ENCODE measurements at regions of chr5 and their contacts with region 1.

Region 1: DNA sequence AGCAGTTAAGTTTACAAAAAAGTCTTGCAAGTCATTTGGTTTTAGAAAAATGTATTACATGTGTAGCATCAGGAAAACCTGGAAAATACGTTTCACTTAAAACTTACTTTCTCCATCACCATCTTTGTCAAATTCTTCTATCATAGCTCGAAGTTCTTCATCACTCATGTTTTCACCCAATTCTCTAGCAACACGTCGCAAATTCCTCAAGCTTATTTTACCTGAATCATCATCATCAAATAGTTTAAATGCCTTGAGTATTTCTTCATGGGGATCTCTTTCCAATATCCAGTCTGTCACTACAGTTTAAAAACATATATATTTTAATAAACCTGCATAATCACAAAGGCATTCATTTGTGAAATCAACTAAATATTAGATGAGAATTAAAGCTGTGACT is 10.3 kb downstream of the CETN3 start:
- DNase-seq: no peak
- ATAC-seq: no peak
- H3K4me3 ChIP-seq: no peak overlapping the region
- H3K4me3 Mint-ChIP-seq: no peak overlapping the region
- H3K27ac ChIP-seq: no peak overlapping the region
- H3K27ac Mint-ChIP-seq: no peak overlapping the region
- H3K4me1 ChIP-seq: no peaks in the 10 kb centered on the region
- H3K4me1 Mint-ChIP-seq: peaks cover 6% of the 10 kb centered on the region
- H3K27me3 ChIP-seq: no peaks in the 10 kb centered on the region
- H3K27me3 Mint-ChIP-seq: no peaks in the 10 kb centered on the region
- CTCF ChIP-seq: no peak

Region 2: DNA sequence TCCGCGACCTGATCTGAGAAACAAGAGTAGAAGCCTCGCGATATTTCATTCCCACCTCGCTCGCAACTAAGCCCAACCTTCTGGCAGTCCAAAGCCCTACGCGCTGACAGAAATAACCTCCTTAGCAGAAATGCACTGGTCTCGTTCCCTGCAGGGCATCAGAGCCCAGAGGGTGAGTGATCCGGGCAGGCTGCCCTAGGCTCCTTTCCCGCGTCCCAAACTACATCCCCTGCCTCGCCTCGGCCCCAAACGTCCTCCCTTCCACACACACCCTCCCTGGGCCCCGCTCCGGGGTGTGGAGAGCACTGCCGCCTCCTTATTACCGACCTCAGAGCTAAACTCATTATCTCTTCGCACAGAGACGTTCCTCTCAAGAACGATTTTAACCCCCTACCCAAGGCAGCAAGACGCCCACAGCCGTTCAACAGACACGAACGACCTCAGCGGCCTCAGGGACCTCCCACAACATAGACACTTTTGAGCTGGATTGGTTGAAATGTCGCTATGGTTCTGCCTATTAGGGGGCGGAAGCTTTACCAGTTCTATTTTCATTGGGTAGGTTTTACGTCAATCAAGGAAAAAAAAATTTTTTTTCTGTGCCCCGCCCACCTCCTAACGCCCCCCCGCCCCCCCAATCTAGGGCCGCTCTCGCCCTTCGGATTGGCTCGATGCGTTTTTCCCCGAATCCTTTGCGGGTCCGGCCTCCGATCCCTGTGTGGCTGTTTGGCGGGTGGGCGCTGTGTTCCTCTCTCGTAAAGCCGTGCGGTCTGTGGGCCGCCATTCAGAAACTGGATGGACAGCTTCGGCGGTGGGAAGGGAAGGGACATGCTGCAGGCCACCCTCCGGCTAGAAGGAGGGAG is 10.3 kb after region 1 on chr5 and contains the start of gene CETN3:
- CTCF ChIA-PET with region 1: no interaction called
- POLR2A ChIA-PET with region 1: interaction called, 14 read pairs
- intact Hi-C with region 1: no loop called
- DNase-seq: peak; percentile 81 to 96 (median 89)
- ATAC-seq: peak; percentile 90
- H3K4me3 ChIP-seq: peak within 1 kb of the TSS; percentile 91 to 99
- H3K4me3 Mint-ChIP-seq: no peak within 1 kb of the TSS
- H3K27ac ChIP-seq: peak within 1 kb of the TSS; percentile 93 to 95
- H3K27ac Mint-ChIP-seq: no peak within 1 kb of the TSS
- H3K4me1 ChIP-seq: peaks cover 7% of the 10 kb centered on the region
- H3K4me1 Mint-ChIP-seq: peaks cover 24% of the 10 kb centered on the region
- H3K27me3 ChIP-seq: no peaks in the 10 kb centered on the region
- H3K27me3 Mint-ChIP-seq: no peaks in the 10 kb centered on the region
- CTCF ChIP-seq: no peak
- total RNA-seq, gene CETN3: 2.4 to 3.4 TPM

Measured in CD8-positive, alpha-beta T cell (primary cell).